Dendritic cell treated with granulocyte-macrophage colony-stimulating factor and Interleukin-4, amounts not matched to agents 40 ng/mL and 50 ng/mL, for 4 days (primary cell): ENCODE measurements at regions of chr19 and their contacts with region 1.

Region 1: DNA sequence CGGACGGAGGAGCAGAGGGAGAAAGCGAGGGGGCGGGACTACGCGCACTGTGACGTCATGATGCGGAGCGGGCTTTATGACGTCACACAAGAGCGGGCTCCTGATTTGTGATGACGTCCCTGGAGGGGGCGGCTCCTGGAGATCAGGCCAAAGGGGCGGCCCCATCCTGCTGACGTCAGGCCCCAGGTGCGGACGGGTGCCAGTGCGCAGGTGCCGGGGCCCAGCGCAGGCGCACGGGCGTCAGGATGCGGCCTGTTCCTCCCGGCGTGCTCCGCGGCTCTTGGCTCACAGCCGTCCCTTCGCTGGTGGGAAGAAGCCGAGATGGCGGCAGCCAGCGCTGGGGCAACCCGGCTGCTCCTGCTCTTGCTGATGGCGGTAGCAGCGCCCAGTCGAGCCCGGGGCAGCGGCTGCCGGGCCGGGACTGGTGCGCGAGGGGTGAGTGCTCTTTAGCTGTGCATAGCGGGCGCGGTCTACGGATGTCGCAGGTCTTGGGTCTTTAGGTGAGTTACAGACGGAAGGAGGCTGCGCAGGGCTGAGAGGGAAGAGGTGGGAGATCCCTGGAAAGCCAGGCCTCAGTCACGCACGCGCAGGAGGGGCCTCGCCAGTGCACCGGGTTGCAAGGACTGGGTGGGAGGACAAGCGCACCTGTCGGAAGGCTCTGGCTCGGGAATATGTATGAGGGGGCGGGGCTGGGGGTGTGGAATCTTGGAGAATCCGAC is at the starts of genes EMC10 and GARIN5A:
- H3K4me3 Mint-ChIP-seq: peak within 1 kb of the TSS; percentile 93
- H3K27ac Mint-ChIP-seq: peak within 1 kb of the TSS; percentile 88
- H3K4me1 Mint-ChIP-seq: peaks cover 20% of the 10 kb centered on the region
- H3K27me3 Mint-ChIP-seq: peaks cover 5% of the 10 kb centered on the region

Region 2: DNA sequence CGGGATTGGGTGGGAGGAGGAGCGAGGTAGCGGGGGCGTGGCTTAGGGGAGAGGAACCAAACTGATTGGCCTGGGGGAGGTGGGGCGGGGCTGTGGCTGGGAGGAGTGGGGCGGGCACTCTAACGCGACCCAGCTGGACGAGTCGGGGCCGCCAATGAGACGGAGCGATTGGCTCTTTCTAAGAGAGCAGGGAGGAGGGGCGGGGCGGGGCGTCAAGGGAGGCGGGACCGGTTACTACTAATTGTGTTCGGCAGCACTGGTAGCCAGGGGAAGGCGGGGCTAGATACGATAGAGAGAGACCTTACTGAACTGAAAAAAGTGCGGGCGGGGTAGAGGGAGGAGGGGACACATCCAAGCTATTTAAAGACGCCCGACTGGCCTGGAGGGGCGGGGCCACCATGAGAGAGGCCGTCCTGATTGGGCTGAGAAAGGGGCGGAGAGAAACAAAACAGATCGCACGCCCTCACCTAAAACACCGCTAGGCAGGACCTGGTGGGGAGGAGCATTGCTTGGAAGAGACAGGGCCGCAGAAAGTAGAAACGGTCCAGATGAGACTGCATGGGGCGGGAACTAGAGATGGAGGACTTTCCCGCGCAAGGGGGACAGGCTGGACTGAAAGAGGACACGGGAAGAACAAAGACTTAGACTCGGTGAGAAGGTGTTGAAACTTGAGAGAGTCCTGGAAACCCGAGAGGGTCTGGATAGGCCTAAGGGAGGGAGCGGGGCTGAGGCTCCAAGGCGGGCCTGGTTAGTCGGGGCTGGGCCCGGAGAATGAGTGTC is 147.0 kb before region 1 on chr19 and contains the start of gene KCNC3:
- intact Hi-C with region 1: loop called (anchors 1 kb)
- H3K4me3 Mint-ChIP-seq: peak within 1 kb of the TSS; percentile 81
- H3K27ac Mint-ChIP-seq: peak within 1 kb of the TSS; percentile 84
- H3K4me1 Mint-ChIP-seq: peaks cover 85% of the 10 kb centered on the region
- H3K27me3 Mint-ChIP-seq: peaks cover 20% of the 10 kb centered on the region

Region 3: DNA sequence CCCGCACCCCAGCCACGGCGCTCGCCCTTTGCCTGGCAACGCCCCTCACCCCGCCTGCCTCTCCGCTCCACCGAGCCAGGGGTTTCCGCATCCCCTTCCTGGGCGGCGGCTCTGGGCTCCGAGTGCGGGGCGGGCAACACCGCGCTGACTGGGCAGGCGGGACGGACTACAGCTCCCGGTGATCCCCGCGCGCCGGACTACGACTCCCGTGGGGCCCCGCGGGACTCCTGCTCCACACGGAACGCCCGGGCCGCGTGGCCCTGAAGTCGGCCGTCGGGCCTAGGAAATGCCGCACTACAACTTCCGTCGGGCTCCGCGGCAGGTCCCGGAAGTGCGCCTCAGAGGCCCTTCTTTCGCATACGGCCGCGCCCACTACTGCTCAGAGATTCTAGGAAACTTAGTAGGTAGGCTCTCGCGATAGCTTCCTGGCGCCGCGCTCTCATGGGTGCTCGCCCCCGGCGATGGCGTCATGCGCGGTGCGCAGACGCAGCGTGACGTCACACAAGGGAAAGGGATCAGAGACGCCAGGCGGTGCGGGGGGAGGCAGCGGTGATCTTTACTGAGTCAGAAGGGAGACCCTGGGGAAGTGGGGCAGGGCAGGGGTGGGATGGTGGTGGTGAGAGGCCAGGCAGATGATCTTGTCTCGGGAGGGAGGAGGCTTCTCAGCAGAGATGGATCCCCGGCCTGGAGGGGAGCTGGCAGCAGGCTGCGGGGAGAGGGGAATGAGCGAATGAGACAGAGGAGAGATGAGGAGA is 34.9 kb after region 1 on chr19 and contains the start of gene JOSD2:
- intact Hi-C with region 1: loop called (anchors 1 kb)
- H3K4me3 Mint-ChIP-seq: peak within 1 kb of the TSS; percentile 72
- H3K27ac Mint-ChIP-seq: peak within 1 kb of the TSS; percentile 84
- H3K4me1 Mint-ChIP-seq: peaks cover 42% of the 10 kb centered on the region
- H3K27me3 Mint-ChIP-seq: peaks cover 28% of the 10 kb centered on the region

Region 4: DNA sequence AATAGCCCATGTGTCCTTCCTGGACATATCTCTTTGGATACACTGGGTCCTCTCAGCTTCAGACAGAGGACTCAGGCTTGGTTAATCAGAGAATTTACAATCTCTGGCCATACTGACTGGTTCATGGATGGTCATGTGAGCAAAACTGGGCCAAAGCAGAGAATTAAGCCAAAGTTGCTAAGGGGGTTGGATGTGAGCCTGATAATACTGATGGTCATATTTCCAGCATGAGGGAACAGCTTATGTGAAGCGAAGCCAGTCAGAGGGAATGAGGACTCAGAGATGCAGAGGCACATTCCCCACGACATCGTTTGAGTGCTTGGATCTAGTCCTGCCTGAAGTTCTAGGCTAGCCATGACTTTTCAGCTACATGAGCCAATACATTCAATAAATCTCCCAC is 113.8 kb after region 1 on chr19:
- intact Hi-C with region 1: no loop called
- H3K4me3 Mint-ChIP-seq: no peak overlapping the region
- H3K27ac Mint-ChIP-seq: no peak overlapping the region
- H3K4me1 Mint-ChIP-seq: no peaks in the 10 kb centered on the region
- H3K27me3 Mint-ChIP-seq: peaks cover 2% of the 10 kb centered on the region